ENCODE measurements at regions of chr18 and their contacts with region 1.

Region 1: DNA sequence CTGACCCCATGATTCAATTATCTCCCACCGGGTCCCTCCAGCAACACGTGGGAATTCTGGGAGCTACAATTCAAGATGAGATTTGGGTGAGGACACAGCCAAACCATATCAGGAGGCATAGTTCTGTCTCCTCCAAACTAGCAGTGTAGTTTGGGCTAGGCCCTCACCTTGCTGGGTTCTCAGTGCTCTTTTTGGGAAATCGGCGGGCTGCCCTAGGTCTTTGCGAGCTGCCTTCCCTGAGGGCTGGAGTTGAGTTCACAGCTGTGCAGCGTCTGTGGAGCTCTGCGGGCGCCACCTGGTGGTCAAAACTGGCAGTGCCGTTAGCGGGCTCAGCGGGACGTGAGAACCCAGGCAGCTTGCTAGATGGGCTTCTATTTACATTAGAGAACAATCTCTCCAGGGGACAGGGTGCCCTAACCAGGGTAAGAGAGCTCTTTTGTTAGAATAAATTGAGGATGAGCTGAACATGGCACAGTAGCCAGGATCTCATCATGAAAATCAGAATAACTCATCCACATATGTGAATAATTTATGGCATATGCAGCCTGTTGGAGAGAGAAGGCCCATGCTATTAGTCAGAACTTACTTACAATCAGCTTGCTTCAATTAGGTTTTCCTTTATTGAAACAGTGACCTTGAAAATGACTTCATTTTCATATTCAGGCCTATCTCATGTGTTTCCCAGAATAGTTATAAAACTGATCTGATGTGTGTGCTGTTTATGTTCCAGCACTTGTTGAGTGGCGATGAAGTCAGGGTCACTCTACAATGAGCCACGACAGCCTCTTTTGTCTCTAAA is 27.4 kb upstream of the YES1 start:
- DNase-seq: peak; percentile 89 to 98
- ATAC-seq: peak; percentile 92
- H3K4me3 ChIP-seq: no peak overlapping the region
- H3K27ac ChIP-seq: no peak overlapping the region
- H3K4me1 ChIP-seq: peaks cover 3 to 7% of the 10 kb centered on the region in 2 donors
- H3K27me3 ChIP-seq: no peaks in the 10 kb centered on the region

Region 2: GRCh38 chr18:275486-275885 is 563.9 kb before region 1 on chr18:
- intact Hi-C with region 1: loop called in 1 of 2 experiments (anchors 10 kb)
- DNase-seq: no peak
- ATAC-seq: peak; percentile 29
- H3K4me3 ChIP-seq: no peak overlapping the region
- H3K27ac ChIP-seq: no peak overlapping the region
- H3K4me1 ChIP-seq: no peaks in the 10 kb centered on the region
- H3K27me3 ChIP-seq: no peaks in the 10 kb centered on the region

Region 3: DNA sequence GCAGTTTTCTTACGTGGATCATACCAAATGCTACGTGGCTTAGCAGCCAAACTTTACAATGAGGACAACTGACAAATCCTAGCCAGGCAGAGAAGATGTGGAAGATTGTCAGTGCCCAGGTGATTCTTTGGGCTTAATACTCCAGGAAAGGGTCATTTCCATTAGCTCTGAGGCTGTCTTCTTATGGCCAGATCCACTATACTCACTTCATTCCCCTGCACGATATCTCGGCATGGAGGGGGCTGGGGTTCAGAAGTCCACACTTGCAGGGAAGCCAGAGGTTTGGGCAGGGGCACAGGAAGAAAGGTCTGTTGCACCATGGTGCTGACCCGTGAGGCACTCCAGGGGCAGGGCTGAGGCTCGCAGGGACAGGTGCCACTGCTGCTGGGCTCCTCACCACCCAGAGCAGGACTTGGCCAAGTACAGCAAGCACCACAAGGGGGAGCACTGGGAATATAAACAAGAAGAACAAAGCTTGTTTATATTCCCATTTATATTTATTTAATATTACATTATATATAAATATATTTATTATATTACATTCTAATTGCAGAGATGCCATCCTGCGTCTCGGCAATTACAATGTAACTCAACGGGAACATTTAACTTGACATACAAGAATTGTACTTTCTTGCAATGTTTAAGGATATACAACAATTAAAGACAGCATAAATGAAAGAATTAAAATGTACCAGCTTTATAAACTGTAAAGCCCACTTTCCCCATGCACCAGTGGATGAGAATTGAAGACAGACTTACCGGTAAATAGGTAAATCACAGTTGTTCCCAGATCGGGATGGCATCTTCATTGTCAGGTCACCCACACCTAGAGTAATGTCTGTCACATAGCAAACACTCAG is 215.4 kb before region 1 on chr18:
- intact Hi-C with region 1: loop called in 1 of 2 experiments (anchors 10 kb)
- DNase-seq: peak in 1 of 2 donors; percentile 74
- ATAC-seq: peak; percentile 64
- H3K4me3 ChIP-seq: no peak overlapping the region
- H3K27ac ChIP-seq: no peak overlapping the region
- H3K4me1 ChIP-seq: no peaks in the 10 kb centered on the region
- H3K27me3 ChIP-seq: peaks cover 0 to 1% of the 10 kb centered on the region in 2 donors

Region 4: DNA sequence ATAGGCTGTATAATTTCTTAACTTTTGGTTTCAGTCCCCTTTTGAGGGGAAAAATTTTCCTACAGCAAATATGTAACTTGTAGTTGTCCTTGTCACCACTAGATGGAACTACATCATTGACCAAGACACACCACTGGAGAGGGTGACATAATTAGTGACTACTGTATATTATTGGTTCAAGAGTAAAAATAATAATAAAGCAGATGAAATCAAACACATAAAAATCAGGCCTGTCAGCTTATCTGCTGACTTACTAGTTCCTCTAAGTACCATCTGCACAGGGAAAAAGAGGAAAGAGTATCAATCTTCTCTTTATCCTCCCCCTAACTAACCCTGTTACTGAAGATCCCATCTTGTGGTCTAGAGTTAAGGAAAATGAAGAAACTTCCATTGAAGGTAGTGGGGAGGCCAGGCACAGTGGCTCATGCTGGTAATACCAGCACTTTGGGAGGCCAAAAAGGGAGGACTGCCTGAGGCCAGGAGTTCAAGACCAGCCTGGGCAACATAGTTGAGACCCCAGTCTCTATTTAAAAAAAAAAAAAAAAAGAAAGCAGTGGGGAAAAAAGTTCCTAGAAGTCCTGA is 97.4 kb before region 1 on chr18:
- intact Hi-C with region 1: loop called in 1 of 2 experiments (anchors 2 kb)
- DNase-seq: no peak
- ATAC-seq: peak; percentile 80
- H3K4me3 ChIP-seq: no peak overlapping the region
- H3K27ac ChIP-seq: no peak overlapping the region
- H3K4me1 ChIP-seq: no peaks in the 10 kb centered on the region
- H3K27me3 ChIP-seq: no peaks in the 10 kb centered on the region

Region 5: DNA sequence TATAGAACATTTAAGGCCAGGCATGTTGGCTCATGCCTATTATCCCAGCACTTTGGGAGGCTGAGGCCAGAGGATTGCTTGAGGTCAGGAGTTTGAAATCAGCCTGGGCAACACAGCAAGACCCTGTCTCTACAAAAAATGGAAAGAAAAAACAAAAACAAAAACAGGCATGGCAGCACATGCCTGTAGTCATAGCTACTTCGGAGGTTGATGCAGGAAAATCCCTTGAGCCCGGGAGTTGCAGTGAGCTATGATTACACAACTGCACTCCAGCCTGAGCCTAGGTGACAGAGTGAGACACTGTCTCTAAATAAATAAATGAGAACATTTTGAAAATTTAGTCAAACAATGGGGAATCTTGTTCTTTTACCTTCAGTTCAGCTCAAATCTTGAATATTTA is 15.2 kb before region 1 on chr18:
- intact Hi-C with region 1: no loop called
- DNase-seq: no peak
- ATAC-seq: no peak
- H3K4me3 ChIP-seq: no peak overlapping the region
- H3K27ac ChIP-seq: no peak overlapping the region
- H3K4me1 ChIP-seq: no peaks in the 10 kb centered on the region
- H3K27me3 ChIP-seq: no peaks in the 10 kb centered on the region